Breast epithelium (tissue), 4 donors: ENCODE measurements at regions of chr14 and their contacts with region 1.

Region 1: DNA sequence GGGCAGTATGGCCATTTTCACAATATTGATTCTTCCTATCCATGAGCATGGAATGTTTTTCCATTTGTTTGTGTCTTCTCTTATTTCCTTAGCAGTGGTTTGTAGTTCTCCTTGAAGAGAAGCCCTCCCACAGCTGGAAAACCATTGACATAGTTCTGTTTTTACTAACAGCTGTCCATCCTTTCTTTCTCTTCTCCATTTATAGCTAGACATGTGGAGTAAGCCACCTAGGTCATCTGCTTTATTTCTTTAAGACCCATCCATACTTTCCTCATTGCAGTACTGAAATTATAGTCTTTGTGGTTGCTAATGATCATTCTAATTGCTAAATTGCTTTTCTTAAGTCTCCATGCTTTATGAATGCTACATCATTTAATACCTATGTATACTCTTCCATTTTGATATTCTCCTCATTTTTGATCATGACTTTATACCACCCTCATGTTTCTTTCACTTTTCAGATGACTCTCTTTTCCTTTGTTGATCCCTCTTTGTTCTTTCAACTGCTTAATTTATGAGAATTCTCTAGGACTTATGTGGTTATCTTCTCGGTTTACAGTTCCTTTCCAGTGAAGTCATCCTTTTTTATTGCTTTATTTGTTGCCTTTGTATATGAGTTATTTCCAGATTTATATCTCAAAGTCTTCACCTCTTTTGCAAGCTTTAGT is 114.2 kb downstream of the PCNX1 start:
- DNase-seq: no peak
- H3K4me3 ChIP-seq: no peak overlapping the region
- H3K27ac ChIP-seq: no peak overlapping the region
- H3K4me1 ChIP-seq: no peaks in the 10 kb centered on the region
- H3K27me3 ChIP-seq: no peaks in the 10 kb centered on the region
- CTCF ChIP-seq: no peak
- POLR2A ChIP-seq: no peak

Region 2: DNA sequence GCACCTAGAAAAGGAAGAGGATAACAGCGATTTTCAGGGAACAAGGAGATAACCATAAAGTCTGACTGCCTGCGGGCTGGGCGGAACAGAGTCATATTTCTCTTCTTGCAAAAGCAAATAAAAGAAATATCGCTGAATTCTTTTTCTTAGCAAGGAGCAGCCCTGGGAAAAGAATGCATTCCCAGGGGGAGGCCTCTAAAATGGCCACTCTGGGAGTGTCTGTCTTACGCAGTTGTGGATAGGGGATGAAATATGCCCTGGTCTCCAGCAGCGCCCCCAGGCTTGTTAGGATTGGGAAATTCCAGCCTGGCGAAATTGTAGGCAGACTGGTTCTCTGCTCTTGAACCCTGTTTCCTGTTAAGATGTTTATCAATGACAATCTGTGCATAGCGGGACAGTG is 73.8 kb before region 1 on chr14:
- intact Hi-C with region 1: no loop called
- DNase-seq: no peak
- H3K4me3 ChIP-seq: no peak overlapping the region
- H3K27ac ChIP-seq: no peak overlapping the region
- H3K4me1 ChIP-seq: no peaks in the 10 kb centered on the region
- H3K27me3 ChIP-seq: no peaks in the 10 kb centered on the region
- CTCF ChIP-seq: no peak
- POLR2A ChIP-seq: no peak

Region 3: GRCh38 chr14:71050204-71050823 is 28.8 kb after region 1 on chr14:
- intact Hi-C with region 1: no loop called
- DNase-seq: no peak
- H3K4me3 ChIP-seq: no peak overlapping the region
- H3K27ac ChIP-seq: no peak overlapping the region
- H3K4me1 ChIP-seq: no peaks in the 10 kb centered on the region
- H3K27me3 ChIP-seq: no peaks in the 10 kb centered on the region
- CTCF ChIP-seq: peak in 1 of 3 donors; percentile 24
- POLR2A ChIP-seq: no peak

Region 4: DNA sequence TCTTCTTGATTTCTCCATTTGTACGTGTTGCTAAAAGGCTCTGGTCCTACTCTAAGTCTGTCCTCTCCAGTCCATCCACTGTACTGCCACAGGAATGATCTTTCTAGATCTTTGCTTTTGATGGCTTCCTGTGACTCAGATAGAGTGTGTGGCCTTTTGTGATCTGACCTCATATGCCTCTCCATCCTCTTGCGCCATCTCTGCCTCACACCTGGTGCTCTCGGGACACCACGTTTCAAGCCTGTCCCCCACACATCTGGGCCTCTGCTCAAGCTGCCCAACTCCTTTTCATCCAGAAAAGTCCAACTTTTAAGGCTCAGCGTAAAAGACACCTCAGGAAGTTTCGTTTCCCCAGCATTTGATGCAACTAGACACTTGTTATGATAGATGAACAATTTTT is 1943.8 kb after region 1 on chr14:
- intact Hi-C with region 1: no loop called
- DNase-seq: no peak
- H3K4me3 ChIP-seq: no peak overlapping the region
- H3K27ac ChIP-seq: no peak overlapping the region
- H3K4me1 ChIP-seq: no peaks in the 10 kb centered on the region
- H3K27me3 ChIP-seq: no peaks in the 10 kb centered on the region
- CTCF ChIP-seq: no peak
- POLR2A ChIP-seq: no peak

Region 5: DNA sequence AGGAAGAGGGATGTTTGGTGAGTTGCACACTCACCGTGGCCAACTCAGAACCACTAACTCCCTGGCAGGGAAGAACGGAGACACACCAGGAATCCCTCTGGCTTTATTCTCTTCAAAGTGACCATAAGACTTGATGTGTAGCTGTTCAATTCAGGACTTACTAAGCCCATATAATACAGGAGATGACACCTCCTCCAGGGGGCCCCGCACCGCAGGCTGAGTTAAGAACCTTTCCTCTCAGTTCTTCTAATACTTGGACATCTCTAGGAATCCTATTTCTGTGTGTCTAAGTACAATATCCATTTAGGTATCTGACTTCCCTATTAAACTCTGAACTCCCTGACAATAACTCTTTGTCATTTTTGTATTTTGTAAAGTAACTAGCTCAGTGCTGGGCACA is 1954.3 kb after region 1 on chr14:
- intact Hi-C with region 1: loop called (anchors 5 kb)
- DNase-seq: no peak
- H3K4me3 ChIP-seq: no peak overlapping the region
- H3K27ac ChIP-seq: no peak overlapping the region
- H3K4me1 ChIP-seq: no peaks in the 10 kb centered on the region
- H3K27me3 ChIP-seq: no peaks in the 10 kb centered on the region
- CTCF ChIP-seq: no peak
- POLR2A ChIP-seq: no peak